Prostate gland (tissue), 2 donors: ENCODE measurements at regions of chr18 and their contacts with region 1.

Region 1: DNA sequence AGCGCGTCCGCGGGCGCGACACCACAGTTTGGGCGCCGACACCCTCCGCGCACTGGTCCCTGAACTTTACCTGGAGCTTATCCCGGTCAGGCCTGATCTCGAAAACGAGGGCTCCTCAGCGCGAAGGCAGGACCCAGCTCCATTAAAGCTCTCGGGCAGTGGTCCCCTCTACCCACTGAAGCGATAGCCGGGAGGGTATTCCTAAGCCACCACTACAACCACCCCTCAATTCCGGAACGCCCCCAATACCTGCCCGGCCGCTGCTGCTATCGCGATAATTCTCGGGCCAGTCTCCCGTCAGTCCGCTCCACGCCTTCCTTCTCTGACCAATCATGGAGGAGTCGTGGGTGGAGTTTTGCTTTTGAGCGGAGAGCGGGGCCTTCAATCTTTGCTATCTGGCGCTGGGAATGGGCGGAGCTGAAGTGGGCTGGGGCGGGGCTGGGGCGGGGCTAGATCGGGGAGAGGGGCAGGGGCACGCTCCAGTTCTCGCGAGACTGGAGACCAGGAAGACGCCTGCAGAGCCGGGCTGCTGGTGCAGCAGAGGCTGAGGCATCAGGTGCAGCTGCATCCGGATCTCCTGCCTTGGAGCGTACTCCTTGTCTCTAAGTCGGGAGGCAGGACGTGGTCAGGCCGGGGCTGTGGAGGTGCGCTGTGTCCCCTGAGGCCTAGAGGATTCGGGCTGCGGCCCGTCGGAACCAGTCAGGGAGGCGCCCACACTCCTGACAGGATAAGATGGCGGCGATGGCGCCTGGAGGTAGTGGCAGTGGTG is at the starts of genes PIGN and RELCH:
- DNase-seq: peak; percentile 99
- H3K4me3 ChIP-seq: peak within 1 kb of the TSS; percentile 75 to 98
- H3K27ac ChIP-seq: peak within 1 kb of the TSS; percentile 72 to 76
- H3K4me1 ChIP-seq: no peaks in the 10 kb centered on the region
- H3K27me3 ChIP-seq: no peaks in the 10 kb centered on the region
- CTCF ChIP-seq: peak in 2 of 4 experiments; percentile 8 to 10
- POLR2A ChIP-seq: peak; percentile 70
- total RNA-seq, gene PIGN: 30.3 to 39.6 TPM
- total RNA-seq, gene RELCH: 34.8 to 49.0 TPM

Region 2: GRCh38 chr18:62239475-62239874 is 52.5 kb after region 1 on chr18:
- intact Hi-C with region 1: no loop called
- DNase-seq: no peak
- H3K4me3 ChIP-seq: no peak overlapping the region
- H3K27ac ChIP-seq: no peak overlapping the region
- H3K4me1 ChIP-seq: no peaks in the 10 kb centered on the region
- H3K27me3 ChIP-seq: no peaks in the 10 kb centered on the region
- CTCF ChIP-seq: no peak
- POLR2A ChIP-seq: no peak

Region 3: GRCh38 chr18:62249478-62250097 is 62.6 kb after region 1 on chr18:
- intact Hi-C with region 1: loop called (anchors 2 kb)
- DNase-seq: peak; percentile 81
- H3K4me3 ChIP-seq: no peak overlapping the region
- H3K27ac ChIP-seq: no peak overlapping the region
- H3K4me1 ChIP-seq: no peaks in the 10 kb centered on the region
- H3K27me3 ChIP-seq: no peaks in the 10 kb centered on the region
- CTCF ChIP-seq: peak; percentile 71 to 84 (median 76)
- POLR2A ChIP-seq: no peak